ENCODE measurements at regions of chr1 and their contacts with region 1.

Region 1: DNA sequence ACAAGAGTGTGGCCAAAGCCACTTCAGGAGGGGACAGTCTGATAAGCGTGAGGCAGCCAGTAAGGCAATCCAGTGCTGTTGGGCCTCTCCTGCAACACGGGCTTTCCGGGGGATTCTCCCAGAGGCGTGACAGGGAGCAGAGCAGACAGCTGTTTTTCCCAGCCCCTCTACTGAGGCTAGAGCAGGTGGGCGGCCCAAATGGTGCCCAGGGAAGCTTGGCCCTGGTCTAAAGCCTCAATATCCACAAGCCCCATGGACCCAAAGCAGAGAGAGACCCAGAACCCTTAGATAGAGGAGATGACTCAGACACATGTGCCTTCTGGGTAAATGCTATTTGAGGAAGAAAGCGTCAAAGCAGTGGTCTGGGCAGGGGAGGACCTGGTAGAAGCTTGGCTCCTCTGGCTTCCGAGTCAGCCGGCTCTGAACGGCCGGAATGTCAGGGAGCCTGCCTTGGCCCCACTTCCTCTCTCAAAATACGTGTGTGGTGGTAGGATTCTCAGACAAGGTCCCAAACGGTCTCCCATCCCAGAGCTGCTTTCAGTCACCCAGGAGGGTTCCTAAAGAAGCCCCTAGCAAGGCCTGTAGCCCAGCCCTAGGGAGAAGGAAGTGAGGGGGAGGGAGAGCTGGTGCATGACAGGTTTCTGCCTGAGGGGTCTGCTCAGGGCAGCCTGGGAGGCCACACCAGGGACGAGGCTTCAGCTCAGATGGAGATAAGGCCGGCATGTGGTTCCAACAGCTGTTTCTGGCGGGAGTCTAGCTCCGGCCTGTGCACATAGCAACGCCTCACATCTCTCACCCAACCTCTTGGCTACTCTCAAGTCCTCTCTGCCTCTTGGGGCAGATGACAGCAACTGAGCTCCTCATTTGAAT is 28.8 kb downstream of the PIK3C2B start:
- DNase-seq: no peak
- H3K4me3 ChIP-seq: no peak overlapping the region
- H3K27ac ChIP-seq: no peak overlapping the region
- H3K4me1 ChIP-seq: peaks cover 0 to 5% (median under 1%) of the 10 kb centered on the region in 4 experiments; a peak in 2 of 7 replicates
- H3K27me3 ChIP-seq: no peaks in the 10 kb centered on the region
- CTCF ChIP-seq: no peak
- EP300 ChIP-seq: no peak
- POLR2A ChIP-seq: no peak
- RAD21 ChIP-seq: no peak

Region 2: GRCh38 chr1:204431310-204432165 is 34.2 kb before region 1 on chr1:
- CTCF ChIA-PET with region 1: interaction called, 18 read pairs
- POLR2A ChIA-PET with region 1: no interaction called
- DNase-seq: peak; percentile 62 to 96
- H3K4me3 ChIP-seq: no peak overlapping the region
- H3K27ac ChIP-seq: no peak overlapping the region
- H3K4me1 ChIP-seq: 0 out of 7 replicates have a peak, but pooled peaks cover 0 to 2% (median 0%) of the 10 kb centered on the region in 4 experiments
- H3K27me3 ChIP-seq: no peaks in the 10 kb centered on the region
- CTCF ChIP-seq: peak; percentile 84 to 95 (median 91)
- EP300 ChIP-seq: no peak
- POLR2A ChIP-seq: no peak
- RAD21 ChIP-seq: peak; percentile 61 to 68

Region 3: GRCh38 chr1:204446370-204447111 is 19.2 kb before region 1 on chr1:
- CTCF ChIA-PET with region 1: interaction called, 111 read pairs
- POLR2A ChIA-PET with region 1: no interaction called
- DNase-seq: peak; percentile 75 to 95
- H3K4me3 ChIP-seq: no peak overlapping the region; a peak in 1 of 8 replicates
- H3K27ac ChIP-seq: no peak overlapping the region
- H3K4me1 ChIP-seq: peaks cover 0 to 13% (median 7%) of the 10 kb centered on the region in 4 experiments; a peak in 6 of 7 replicates
- H3K27me3 ChIP-seq: no peaks in the 10 kb centered on the region
- CTCF ChIP-seq: peak; percentile 88 to 97 (median 93)
- EP300 ChIP-seq: no peak
- POLR2A ChIP-seq: no peak
- RAD21 ChIP-seq: peak; percentile 90 to 97

Region 4: DNA sequence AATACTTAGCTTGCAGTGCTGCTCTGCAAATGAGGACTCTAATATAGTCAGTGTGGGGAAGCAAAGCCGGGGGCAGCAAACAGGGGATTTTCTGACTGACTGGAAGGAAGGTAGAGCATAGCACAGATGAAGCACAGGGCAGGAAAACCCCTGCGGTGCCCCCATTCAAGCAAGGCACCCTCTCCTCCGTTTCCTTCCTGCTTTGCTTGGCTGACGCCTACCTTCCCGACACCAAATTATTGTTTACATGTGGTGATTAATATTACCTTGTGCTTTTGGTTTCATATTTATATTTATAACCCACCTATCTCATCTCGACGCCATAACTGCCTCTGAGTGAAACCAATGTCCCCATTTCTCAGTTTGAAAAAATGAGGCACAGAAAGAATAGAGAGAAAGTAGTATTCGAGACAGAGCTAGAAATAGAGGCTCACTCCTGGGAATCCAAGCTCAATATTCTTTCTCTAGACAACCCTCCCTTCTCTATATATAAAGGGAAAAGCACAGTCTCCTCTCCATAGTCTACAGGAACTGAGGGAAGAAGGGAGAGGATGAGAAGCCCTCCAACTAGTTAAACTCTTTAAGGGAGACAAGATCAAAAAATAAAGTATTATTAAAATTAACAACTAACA is 12.5 kb before region 1 on chr1:
- CTCF ChIA-PET with region 1: interaction called, 111 read pairs
- POLR2A ChIA-PET with region 1: interaction called, 12 read pairs
- DNase-seq: no peak
- H3K4me3 ChIP-seq: no peak overlapping the region
- H3K27ac ChIP-seq: no peak overlapping the region
- H3K4me1 ChIP-seq: peaks cover 12 to 40% (median 23%) of the 10 kb centered on the region in 4 experiments
- H3K27me3 ChIP-seq: no peaks in the 10 kb centered on the region
- CTCF ChIP-seq: no peak
- EP300 ChIP-seq: no peak
- POLR2A ChIP-seq: no peak
- RAD21 ChIP-seq: no peak

Region 5: DNA sequence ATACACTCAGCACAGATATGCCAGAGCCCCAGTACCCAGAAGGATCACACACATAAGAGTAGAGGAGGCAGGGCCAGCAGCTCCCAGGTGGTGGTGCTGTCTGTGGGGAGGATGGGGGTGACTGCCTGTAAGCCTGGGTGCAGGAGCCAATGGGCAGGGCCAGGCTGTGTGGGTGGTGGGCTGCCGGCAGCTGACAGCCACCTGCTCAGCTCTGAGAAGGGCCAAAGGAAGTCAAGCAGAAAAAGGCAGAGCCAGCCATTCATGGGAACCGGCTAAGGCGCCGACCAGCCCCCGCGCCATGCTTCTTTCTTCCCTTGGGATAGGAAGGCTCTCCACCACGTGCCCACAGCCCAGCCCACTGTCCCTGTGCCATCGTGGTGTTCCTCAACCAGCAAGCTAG is 14.7 kb after region 1 on chr1:
- CTCF ChIA-PET with region 1: interaction called, 2,124 read pairs
- POLR2A ChIA-PET with region 1: interaction called, 10 read pairs
- DNase-seq: no peak
- H3K4me3 ChIP-seq: no peak overlapping the region
- H3K27ac ChIP-seq: no peak overlapping the region
- H3K4me1 ChIP-seq: peaks cover 3 to 13% (median 9%) of the 10 kb centered on the region in 4 experiments
- H3K27me3 ChIP-seq: no peaks in the 10 kb centered on the region; a peak in 1 of 7 replicates
- CTCF ChIP-seq: no peak
- EP300 ChIP-seq: no peak
- POLR2A ChIP-seq: no peak
- RAD21 ChIP-seq: no peak

Region 6: GRCh38 chr1:204545202-204545601 is 79.4 kb after region 1 on chr1:
- CTCF ChIA-PET with region 1: no interaction called
- POLR2A ChIA-PET with region 1: no interaction called
- DNase-seq: no peak
- H3K4me3 ChIP-seq: no peak overlapping the region
- H3K27ac ChIP-seq: no peak overlapping the region
- H3K4me1 ChIP-seq: no peaks in the 10 kb centered on the region
- H3K27me3 ChIP-seq: no peaks in the 10 kb centered on the region
- CTCF ChIP-seq: no peak
- EP300 ChIP-seq: no peak
- POLR2A ChIP-seq: no peak
- RAD21 ChIP-seq: no peak

Measured in H1 (cell line).